Activated CD4-positive, alpha-beta memory T cell treated with anti-CD3 and anti-CD28 coated beads for 36 hours (primary cell): ENCODE measurements at regions of chr12 and their contacts with region 1.

Region 1: DNA sequence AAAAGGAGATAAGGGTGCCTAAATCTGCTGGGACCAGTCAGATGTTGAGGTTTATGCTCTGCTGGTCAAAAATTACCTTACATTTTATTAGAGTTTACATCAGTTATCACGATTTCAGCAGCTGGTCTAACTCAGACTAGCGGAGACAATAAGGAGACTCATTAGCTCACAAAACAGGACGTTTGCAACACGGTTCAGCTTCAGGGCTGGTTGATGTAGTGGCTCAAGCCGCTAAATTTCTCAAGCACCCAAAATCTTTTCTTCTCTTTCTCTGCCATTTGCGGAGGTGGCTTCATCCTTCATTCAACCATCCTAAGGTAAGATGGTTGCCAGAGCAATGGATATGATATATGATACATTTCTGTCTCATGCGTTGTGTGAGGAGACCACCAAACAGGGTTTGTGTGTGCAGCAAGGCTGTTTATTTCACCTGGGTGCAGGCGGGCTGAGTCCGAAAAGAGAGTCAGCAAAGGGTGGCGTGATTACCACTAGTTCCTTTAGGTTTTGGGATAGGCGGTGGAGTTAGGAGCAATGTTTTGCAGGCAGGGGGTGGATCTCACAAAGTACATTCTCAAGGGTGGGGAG is 30.3 kb upstream of the CLIP1 start:
- DNase-seq: peak; percentile 23
- H3K4me3 Mint-ChIP-seq: peak overlapping the region; percentile 70
- H3K27ac Mint-ChIP-seq: peak overlapping the region; percentile 92
- H3K4me1 Mint-ChIP-seq: peaks cover 29% of the 10 kb centered on the region
- H3K27me3 Mint-ChIP-seq: no peaks in the 10 kb centered on the region

Region 2: GRCh38 chr12:122366685-122367475 is 85.9 kb before region 1 on chr12:
- CTCF ChIA-PET with region 1: no interaction called
- POLR2A ChIA-PET with region 1: no interaction called
- intact Hi-C with region 1: no loop called
- DNase-seq: peak; percentile 36
- H3K4me3 Mint-ChIP-seq: no peak overlapping the region
- H3K27ac Mint-ChIP-seq: peak overlapping the region; percentile 69
- H3K4me1 Mint-ChIP-seq: peaks cover 24% of the 10 kb centered on the region
- H3K27me3 Mint-ChIP-seq: no peaks in the 10 kb centered on the region

Region 3: GRCh38 chr12:122382919-122383350 is 69.9 kb before region 1 on chr12:
- CTCF ChIA-PET with region 1: no interaction called
- POLR2A ChIA-PET with region 1: no interaction called
- intact Hi-C with region 1: no loop called
- DNase-seq: no peak
- H3K4me3 Mint-ChIP-seq: no peak overlapping the region
- H3K27ac Mint-ChIP-seq: no peak overlapping the region
- H3K4me1 Mint-ChIP-seq: peaks cover 4% of the 10 kb centered on the region
- H3K27me3 Mint-ChIP-seq: no peaks in the 10 kb centered on the region

Region 4: GRCh38 chr12:122413516-122414404 is 39.0 kb before region 1 on chr12:
- CTCF ChIA-PET with region 1: no interaction called
- POLR2A ChIA-PET with region 1: interaction called, 3 read pairs
- intact Hi-C with region 1: loop called (anchors 2 kb)
- DNase-seq: no peak
- H3K4me3 Mint-ChIP-seq: peak overlapping the region; percentile 71
- H3K27ac Mint-ChIP-seq: peak overlapping the region; percentile 96
- H3K4me1 Mint-ChIP-seq: peaks cover 56% of the 10 kb centered on the region
- H3K27me3 Mint-ChIP-seq: no peaks in the 10 kb centered on the region

Region 5: GRCh38 chr12:122421821-122422729 is 30.7 kb before region 1 on chr12 and contains the start of gene CLIP1:
- CTCF ChIA-PET with region 1: interaction called, 3 read pairs
- POLR2A ChIA-PET with region 1: no interaction called
- intact Hi-C with region 1: loop called (anchors 2 kb)
- DNase-seq: peak; percentile 68
- H3K4me3 Mint-ChIP-seq: peak within 1 kb of the TSS; percentile 93
- H3K27ac Mint-ChIP-seq: peak within 1 kb of the TSS; percentile 92
- H3K4me1 Mint-ChIP-seq: peaks cover 48% of the 10 kb centered on the region
- H3K27me3 Mint-ChIP-seq: no peaks in the 10 kb centered on the region
- total RNA-seq, gene CLIP1: 69.2 to 71.8 TPM

Region 6: DNA sequence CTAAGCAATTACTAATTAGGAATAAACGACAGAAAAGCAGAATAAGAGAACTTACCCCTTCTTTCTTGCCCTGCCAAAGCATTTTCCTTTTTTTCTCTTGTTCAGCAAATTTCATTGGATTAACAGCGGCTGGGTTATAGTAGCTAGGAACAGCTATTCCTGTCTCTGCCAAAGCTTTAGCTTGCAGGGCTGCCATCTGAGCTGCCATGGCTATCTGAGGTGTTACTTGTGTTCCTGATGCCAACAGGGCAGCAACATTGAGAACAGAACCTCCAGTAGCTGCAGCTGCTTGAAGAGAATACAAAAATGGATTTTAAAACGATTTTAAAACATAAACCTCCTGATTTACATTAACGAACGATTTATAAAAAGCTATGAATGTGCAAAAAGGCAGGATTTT is 55.4 kb after region 1 on chr12:
- CTCF ChIA-PET with region 1: no interaction called
- POLR2A ChIA-PET with region 1: no interaction called
- intact Hi-C with region 1: no loop called
- DNase-seq: no peak
- H3K4me3 Mint-ChIP-seq: no peak overlapping the region
- H3K27ac Mint-ChIP-seq: no peak overlapping the region
- H3K4me1 Mint-ChIP-seq: no peaks in the 10 kb centered on the region
- H3K27me3 Mint-ChIP-seq: no peaks in the 10 kb centered on the region

Region 7: DNA sequence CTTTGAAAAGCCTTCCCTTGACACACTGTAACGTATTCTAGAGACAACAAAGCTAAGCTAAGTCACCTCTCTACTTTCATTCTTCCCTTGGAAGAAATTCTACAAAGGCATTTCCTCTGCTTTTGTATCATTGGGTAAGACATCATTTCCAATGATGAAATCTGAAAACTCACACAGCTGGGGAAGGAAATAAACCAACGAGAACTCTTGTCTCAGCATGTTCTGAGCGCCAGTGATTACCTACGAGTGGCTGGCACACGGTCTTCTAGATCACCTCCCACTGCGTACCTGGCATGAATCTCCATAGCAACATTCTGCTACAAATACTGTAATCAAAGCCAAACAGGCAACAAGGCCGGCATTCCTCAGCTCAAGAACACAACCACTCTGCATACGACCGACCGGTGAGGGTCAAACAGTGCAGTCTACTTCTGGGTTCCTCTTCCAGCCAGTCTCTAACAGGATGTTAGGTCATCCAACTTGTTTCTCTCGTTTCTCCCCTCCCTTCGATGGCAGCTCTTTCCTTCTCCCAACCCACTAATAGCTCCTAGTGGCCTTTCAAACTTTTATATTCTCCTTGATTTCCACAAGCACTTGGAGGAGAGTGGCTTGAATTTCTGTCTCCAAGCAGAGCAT is 435.6 kb after region 1 on chr12:
- CTCF ChIA-PET with region 1: no interaction called
- POLR2A ChIA-PET with region 1: no interaction called
- intact Hi-C with region 1: no loop called
- DNase-seq: peak; percentile 65
- H3K4me3 Mint-ChIP-seq: peak overlapping the region; percentile 70
- H3K27ac Mint-ChIP-seq: peak overlapping the region; percentile 88
- H3K4me1 Mint-ChIP-seq: peaks cover 77% of the 10 kb centered on the region
- H3K27me3 Mint-ChIP-seq: peaks cover 5% of the 10 kb centered on the region